Activated T-helper 2 cell treated with anti-CD3 and anti-CD28 coated beads, Interferon-gamma antibody, Interleukin-2, Interleukin-4, amounts not matched to agents 10 μg/mL and 5 μg/mL and 100 μg/mL, durations not matched to agents 14 hours and 24 hours and 36 hours (primary cell): ENCODE measurements at regions of chr4 and their contacts with region 1.

Region 1: DNA sequence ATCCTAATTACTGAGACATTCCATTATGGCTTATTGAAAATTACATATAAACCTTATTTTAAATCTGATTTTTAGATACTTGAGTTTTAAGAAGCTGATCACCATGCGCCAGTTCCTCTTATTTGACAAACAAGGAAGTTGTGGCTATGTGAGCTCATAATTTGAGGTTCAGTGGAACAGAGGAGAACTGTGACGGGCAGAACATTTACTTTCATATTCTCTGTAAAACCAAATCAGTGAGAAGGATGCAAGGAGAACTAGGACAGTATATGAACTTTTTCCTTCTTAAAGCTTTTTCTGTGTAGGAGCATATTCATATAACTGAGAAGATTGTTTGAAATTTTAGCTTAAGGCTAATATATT is 25.3 kb downstream of the STIM2 start:
- DNase-seq: no peak
- H3K4me3 Mint-ChIP-seq: peak overlapping the region; percentile 74
- H3K27ac Mint-ChIP-seq: peak overlapping the region; percentile 89
- H3K4me1 Mint-ChIP-seq: peaks cover 55% of the 10 kb centered on the region
- H3K27me3 Mint-ChIP-seq: no peaks in the 10 kb centered on the region

Region 2: GRCh38 chr4:26854701-26855100 is 31.2 kb before region 1 on chr4:
- intact Hi-C with region 1: no loop called
- DNase-seq: no peak
- H3K4me3 Mint-ChIP-seq: no peak overlapping the region
- H3K27ac Mint-ChIP-seq: no peak overlapping the region
- H3K4me1 Mint-ChIP-seq: peaks cover 32% of the 10 kb centered on the region
- H3K27me3 Mint-ChIP-seq: peaks cover 12% of the 10 kb centered on the region

Region 3: DNA sequence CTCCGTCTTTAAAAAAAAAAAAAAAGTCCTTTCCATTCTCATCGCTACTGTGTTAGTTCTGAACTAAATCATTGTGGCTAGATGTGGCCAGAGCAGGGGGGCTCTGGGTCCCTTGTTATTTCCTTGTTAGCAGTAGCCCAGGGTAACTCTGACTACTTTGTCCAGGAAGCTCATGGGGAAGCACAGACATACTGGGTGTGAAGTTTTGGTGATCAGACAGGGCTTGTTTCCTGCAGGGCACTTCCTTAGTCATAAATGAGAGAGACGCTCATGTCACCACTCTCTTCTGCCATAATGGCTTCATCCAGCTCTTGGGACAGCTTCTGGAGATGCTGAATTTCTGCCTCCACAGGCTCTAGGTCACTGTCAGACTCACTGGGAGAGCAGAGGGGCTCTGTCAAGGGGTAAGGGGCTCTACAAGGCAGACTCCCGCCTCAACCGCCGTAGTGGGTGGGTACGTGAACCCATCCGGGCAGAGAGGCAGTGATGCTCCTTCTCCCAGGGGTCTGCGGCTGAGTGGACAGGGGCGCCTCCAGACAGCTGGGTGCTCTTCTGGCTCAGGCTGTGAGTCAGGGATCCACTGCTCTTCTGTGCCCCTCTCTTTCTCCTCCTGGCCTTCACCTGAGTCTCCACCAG is 12.4 kb before region 1 on chr4:
- intact Hi-C with region 1: loop called (anchors 1 kb)
- DNase-seq: peak; percentile 43
- H3K4me3 Mint-ChIP-seq: no peak overlapping the region
- H3K27ac Mint-ChIP-seq: peak overlapping the region; percentile 70
- H3K4me1 Mint-ChIP-seq: peaks cover 57% of the 10 kb centered on the region
- H3K27me3 Mint-ChIP-seq: no peaks in the 10 kb centered on the region

Region 4: DNA sequence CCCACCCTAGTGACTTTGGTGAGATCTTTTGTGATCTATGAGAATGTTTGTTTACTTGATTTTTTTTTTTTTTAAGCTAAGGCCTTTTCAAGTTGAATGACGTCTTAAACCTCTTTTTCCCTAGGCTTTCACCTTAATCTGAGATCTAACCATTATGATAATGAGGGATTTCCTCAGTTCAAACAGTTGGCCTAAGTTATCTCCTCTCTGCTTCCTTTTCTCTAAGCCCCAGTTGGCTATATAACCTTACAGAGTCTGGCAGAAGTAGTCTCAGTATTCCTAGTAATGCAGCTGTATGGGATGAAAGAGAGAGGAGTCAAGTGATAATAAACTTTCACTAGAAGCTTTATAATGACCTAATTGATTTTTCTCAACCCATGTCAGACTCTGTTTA is 73.8 kb after region 1 on chr4:
- intact Hi-C with region 1: loop called (anchors 2 kb)
- DNase-seq: no peak
- H3K4me3 Mint-ChIP-seq: no peak overlapping the region
- H3K27ac Mint-ChIP-seq: peak overlapping the region; percentile 50
- H3K4me1 Mint-ChIP-seq: peaks cover 25% of the 10 kb centered on the region
- H3K27me3 Mint-ChIP-seq: no peaks in the 10 kb centered on the region

Region 5: DNA sequence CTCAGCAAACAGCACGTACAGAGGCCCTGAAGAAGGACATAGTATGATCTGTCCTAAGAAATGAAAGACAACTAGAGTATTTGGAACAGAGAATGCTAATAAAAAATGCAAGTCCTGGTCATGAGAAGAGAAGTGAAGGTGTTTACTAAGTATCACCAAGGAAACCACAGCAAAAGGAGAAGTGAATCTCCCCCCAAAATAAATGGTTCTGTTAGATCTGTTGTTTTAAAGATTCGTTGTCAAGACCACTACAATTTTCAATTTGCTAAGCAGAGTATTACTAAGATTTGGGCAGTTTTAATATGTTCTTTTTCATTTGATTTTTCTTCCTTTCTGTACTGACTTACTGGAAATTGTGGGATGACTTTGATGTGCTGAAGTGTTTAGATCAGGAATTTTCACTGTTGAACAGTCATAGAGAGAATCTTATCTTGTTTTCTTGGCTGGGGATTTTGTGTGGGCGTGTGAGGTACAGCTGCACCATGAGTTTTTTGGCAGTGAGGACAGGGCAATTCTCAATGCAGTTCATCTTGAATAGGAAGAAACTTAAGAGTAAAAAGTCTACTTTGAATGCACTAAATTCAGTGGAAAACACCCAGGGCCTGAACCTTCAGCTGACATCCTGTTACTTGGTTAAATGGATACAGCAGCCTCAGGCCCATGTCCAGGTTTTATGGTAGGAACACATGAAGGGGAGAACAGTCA is 106.9 kb after region 1 on chr4:
- intact Hi-C with region 1: loop called (anchors 2 kb)
- DNase-seq: no peak
- H3K4me3 Mint-ChIP-seq: no peak overlapping the region
- H3K27ac Mint-ChIP-seq: no peak overlapping the region
- H3K4me1 Mint-ChIP-seq: peaks cover 14% of the 10 kb centered on the region
- H3K27me3 Mint-ChIP-seq: no peaks in the 10 kb centered on the region